Breast epithelium (tissue), 4 donors: ENCODE measurements at regions of chr15 and their contacts with region 1.

Region 1: GRCh38 chr15:81388436-81388770 is 14.4 kb upstream of the TMC3 start:
- DNase-seq: no peak
- H3K4me3 ChIP-seq: no peak overlapping the region
- H3K27ac ChIP-seq: no peak overlapping the region
- H3K4me1 ChIP-seq: no peaks in the 10 kb centered on the region
- H3K27me3 ChIP-seq: no peaks in the 10 kb centered on the region
- CTCF ChIP-seq: no peak
- POLR2A ChIP-seq: no peak

Region 2: GRCh38 chr15:81351651-81352050 is 36.8 kb before region 1 on chr15:
- intact Hi-C with region 1: loop called (anchors 2 kb)
- DNase-seq: no peak
- H3K4me3 ChIP-seq: no peak overlapping the region
- H3K27ac ChIP-seq: no peak overlapping the region
- H3K4me1 ChIP-seq: no peaks in the 10 kb centered on the region
- H3K27me3 ChIP-seq: no peaks in the 10 kb centered on the region
- CTCF ChIP-seq: no peak
- POLR2A ChIP-seq: no peak